Aorta (tissue), 5 donors: ENCODE measurements at regions of chr2 and their contacts with region 1.

Region 1: GRCh38 chr2:237966565-237967462 is at the start of gene UBE2F:
- DNase-seq: peak; percentile 99
- ATAC-seq: peak; percentile 98
- H3K4me3 ChIP-seq: peak within 1 kb of the TSS; percentile 94
- H3K27ac ChIP-seq: peak within 1 kb of the TSS in 1 of 2 donors; percentile 6
- H3K4me1 ChIP-seq: peaks cover 0 to 2% of the 10 kb centered on the region in 2 donors
- H3K27me3 ChIP-seq: no peaks in the 10 kb centered on the region
- total RNA-seq, gene UBE2F: 42.5 to 44.7 TPM

Region 2: DNA sequence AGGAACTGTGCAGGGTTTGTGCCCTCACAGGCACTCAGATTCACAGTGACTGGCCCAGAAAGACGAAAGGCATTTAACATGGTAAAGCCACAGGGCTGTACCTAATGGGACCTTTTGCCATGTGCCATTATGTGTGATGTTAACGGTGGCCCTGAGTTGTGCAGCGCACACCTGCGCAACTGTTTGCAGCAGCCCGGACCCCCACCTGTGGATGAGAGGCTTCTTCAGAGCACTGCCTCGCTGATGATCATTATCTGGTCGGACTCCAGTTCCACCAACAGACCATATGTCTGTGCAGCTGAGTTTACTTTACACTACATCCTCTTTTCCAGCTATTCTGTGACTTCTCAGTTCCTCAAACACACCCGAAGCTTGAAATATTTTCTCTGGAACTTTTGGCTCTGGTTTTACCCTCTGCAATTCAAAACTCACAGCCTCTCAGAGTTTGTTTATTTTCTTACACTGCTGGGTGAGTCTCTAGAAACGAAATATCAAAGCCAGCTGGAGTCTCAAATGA is 35.6 kb before region 1 on chr2:
- intact Hi-C with region 1: loop called in 1 of 2 experiments (anchors 5 kb)
- DNase-seq: no peak
- ATAC-seq: peak; percentile 15
- H3K4me3 ChIP-seq: no peak overlapping the region
- H3K27ac ChIP-seq: peak overlapping the region in 1 of 2 donors; percentile 67
- H3K4me1 ChIP-seq: peaks cover 0 to 2% of the 10 kb centered on the region in 2 donors
- H3K27me3 ChIP-seq: no peaks in the 10 kb centered on the region